Dendritic cell treated with granulocyte-macrophage colony-stimulating factor and Interleukin-4, amounts not matched to agents 40 ng/mL and 50 ng/mL, for 4 days (primary cell): ENCODE measurements at regions of chr10 and their contacts with region 1.

Region 1: DNA sequence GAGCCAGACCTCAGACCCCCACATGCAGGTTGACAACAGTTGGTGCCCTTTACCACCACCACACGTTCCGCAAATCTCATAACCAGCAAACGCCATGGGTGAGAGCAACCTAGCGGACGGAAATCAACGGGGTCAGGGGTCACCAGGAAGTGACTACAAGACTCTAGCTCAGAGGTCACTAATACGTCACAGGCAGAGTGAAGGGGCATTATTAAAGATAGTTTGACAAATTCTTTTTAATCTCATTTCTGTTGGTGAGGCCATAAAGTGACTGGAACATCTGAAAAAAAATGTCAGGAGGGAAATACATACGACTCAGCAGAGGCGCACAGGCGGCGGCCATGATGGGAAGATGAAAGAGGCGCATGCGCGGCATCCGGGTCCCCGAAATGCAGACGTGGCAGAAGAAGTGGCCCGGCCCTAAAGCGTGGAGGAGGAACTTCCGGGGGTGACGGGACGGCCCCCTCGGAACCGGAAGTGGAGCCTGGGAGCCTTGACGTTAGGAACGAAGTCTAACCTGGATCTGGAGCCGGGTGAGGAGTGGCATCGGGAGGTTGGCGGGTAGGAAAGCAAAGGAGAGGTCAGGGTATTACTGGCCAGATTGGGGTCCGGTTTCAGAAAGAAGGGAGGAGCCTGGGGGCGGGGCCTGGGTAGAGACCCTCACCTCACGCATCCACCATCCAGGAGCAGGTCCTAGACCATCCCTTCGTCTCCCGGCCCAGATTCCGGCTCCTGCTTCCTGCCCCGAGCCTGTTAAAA is at the start of gene SEC24C:
- H3K4me3 Mint-ChIP-seq: peak within 1 kb of the TSS; percentile 95
- H3K27ac Mint-ChIP-seq: peak within 1 kb of the TSS; percentile 100
- H3K4me1 Mint-ChIP-seq: peaks cover 24% of the 10 kb centered on the region
- H3K27me3 Mint-ChIP-seq: no peaks in the 10 kb centered on the region

Region 2: GRCh38 chr10:73110345-73110849 is 633.7 kb before region 1 on chr10 and contains the start of gene NUDT13:
- intact Hi-C with region 1: no loop called
- H3K4me3 Mint-ChIP-seq: peak within 1 kb of the TSS; percentile 79
- H3K27ac Mint-ChIP-seq: peak within 1 kb of the TSS; percentile 91
- H3K4me1 Mint-ChIP-seq: no peaks in the 10 kb centered on the region
- H3K27me3 Mint-ChIP-seq: no peaks in the 10 kb centered on the region

Region 3: GRCh38 chr10:73717556-73717955 is 26.5 kb before region 1 on chr10:
- intact Hi-C with region 1: loop called (anchors 2 kb)
- H3K4me3 Mint-ChIP-seq: peak overlapping the region; percentile 55
- H3K27ac Mint-ChIP-seq: peak overlapping the region; percentile 95
- H3K4me1 Mint-ChIP-seq: peaks cover 58% of the 10 kb centered on the region
- H3K27me3 Mint-ChIP-seq: no peaks in the 10 kb centered on the region

Region 4: GRCh38 chr10:73730153-73730906 is 13.8 kb before region 1 on chr10:
- intact Hi-C with region 1: loop called (anchors 1 kb)
- H3K4me3 Mint-ChIP-seq: peak overlapping the region; percentile 90
- H3K27ac Mint-ChIP-seq: peak overlapping the region; percentile 95
- H3K4me1 Mint-ChIP-seq: peaks cover 12% of the 10 kb centered on the region
- H3K27me3 Mint-ChIP-seq: no peaks in the 10 kb centered on the region

Region 5: DNA sequence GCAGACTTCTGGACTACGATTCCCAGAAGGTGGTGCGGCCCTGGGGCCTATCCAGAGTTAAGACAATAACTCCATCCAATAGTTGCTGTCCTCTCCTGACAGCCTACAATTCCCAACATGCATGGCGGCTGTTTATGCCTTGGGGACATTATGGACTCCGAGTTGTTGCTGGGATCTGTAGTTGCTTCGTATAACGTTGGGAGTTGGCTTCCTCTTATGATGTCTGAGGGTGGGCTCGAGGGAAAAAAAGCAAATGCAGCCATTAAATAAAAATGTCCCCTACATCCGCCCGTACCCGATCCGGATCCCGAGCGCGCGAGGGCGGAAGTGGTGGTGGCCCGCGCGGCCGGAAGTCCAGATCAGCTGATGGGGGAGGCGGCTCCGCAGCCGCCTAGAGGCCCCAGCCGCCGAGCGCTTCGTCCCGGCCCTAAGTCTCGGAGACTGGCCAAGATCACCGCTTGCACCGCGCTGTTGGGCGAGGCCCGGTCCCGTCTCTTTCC is 41.2 kb after region 1 on chr10 and contains the start of gene ZSWIM8:
- intact Hi-C with region 1: loop called (anchors 1 kb)
- H3K4me3 Mint-ChIP-seq: peak within 1 kb of the TSS; percentile 93
- H3K27ac Mint-ChIP-seq: peak within 1 kb of the TSS; percentile 98
- H3K4me1 Mint-ChIP-seq: peaks cover 45% of the 10 kb centered on the region
- H3K27me3 Mint-ChIP-seq: no peaks in the 10 kb centered on the region